Activated T-helper 1 cell treated with anti-CD3 and anti-CD28 coated beads, Interleukin-12 subunit alpha, Interleukin-12 subunit beta, Interleukin-2, Interleukin-4 antibody, amounts not matched to agents 30 ng/mL and 10 ng/mL and 1 ng/mL, durations not matched to agents 14 hours and 24 hours and 36 hours (primary cell): ENCODE measurements at regions of chr10 and their contacts with region 1.

Region 1: GRCh38 chr10:88582806-88583583 is at the start of gene RNLS:
- DNase-seq: peak; percentile 54
- H3K4me3 Mint-ChIP-seq: peak within 1 kb of the TSS; percentile 85
- H3K27ac Mint-ChIP-seq: peak within 1 kb of the TSS; percentile 73
- H3K4me1 Mint-ChIP-seq: peaks cover 14% of the 10 kb centered on the region
- H3K27me3 Mint-ChIP-seq: peaks cover 8% of the 10 kb centered on the region
- total RNA-seq, gene RNLS: 2.0 and 2.5 TPM in 2 replicates

Region 2: GRCh38 chr10:88670497-88670896 is 87.5 kb after region 1 on chr10:
- intact Hi-C with region 1: loop called (anchors 1 kb)
- DNase-seq: no peak
- H3K4me3 Mint-ChIP-seq: no peak overlapping the region
- H3K27ac Mint-ChIP-seq: peak overlapping the region; percentile 7
- H3K4me1 Mint-ChIP-seq: peaks cover 7% of the 10 kb centered on the region
- H3K27me3 Mint-ChIP-seq: peaks cover 5% of the 10 kb centered on the region